ENCODE measurements at regions of chr1 and their contacts with region 1.

Region 1: GRCh38 chr1:55215256-55216021 is at the start of gene USP24:
- DNase-seq: peak; percentile 82
- H3K4me3 Mint-ChIP-seq: peak within 1 kb of the TSS; percentile 93
- H3K27ac Mint-ChIP-seq: peak within 1 kb of the TSS; percentile 96
- H3K4me1 Mint-ChIP-seq: peaks cover 61% of the 10 kb centered on the region
- H3K27me3 Mint-ChIP-seq: peaks cover 3% of the 10 kb centered on the region
- total RNA-seq, gene USP24: 53.6 and 58.6 TPM in 2 replicates

Region 2: DNA sequence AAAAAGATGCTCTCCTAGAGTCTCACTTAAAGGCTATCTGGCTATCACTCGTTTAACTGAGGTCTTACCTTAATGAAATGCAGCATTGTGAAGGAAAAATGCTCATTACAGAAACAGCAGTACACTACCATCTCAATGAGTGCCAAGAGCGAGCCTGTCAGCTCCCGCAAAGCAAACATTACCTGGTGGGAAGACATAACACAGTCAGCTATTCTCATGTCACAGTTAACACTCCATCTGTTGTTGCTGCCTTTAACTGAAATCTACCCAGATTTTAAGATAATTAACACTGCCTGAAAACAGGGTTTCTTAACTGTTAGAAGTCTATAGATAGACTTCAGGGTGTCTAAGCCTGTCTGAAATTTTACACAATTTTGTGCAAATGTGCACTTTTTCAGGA is 137.0 kb before region 1 on chr1:
- intact Hi-C with region 1: loop called (anchors 5 kb)
- DNase-seq: no peak
- H3K4me3 Mint-ChIP-seq: no peak overlapping the region
- H3K27ac Mint-ChIP-seq: no peak overlapping the region
- H3K4me1 Mint-ChIP-seq: peaks cover 4% of the 10 kb centered on the region
- H3K27me3 Mint-ChIP-seq: no peaks in the 10 kb centered on the region

Region 3: DNA sequence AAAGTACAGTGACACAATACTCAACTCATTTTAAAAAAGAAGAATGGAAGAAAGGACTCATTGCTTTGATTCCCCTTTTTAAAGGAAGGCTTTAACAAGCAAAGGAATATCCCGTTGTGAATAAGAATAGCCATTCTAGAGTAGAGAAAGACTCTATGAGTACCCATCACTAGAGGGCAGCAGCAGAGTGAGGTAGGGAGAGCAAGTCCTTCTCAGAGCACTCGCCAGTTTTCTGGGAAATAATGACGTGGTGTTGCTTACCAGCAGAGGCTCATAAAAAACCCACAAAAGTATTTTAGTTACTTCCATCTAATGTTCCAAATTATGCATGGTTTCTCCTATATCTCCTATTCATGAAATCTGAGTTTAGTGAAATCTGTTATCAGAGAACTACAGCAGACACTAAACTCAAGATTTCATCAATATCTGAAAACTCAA is 74.9 kb before region 1 on chr1:
- intact Hi-C with region 1: loop called (anchors 1 kb)
- DNase-seq: peak; percentile 66
- H3K4me3 Mint-ChIP-seq: no peak overlapping the region
- H3K27ac Mint-ChIP-seq: peak overlapping the region; percentile 51
- H3K4me1 Mint-ChIP-seq: peaks cover 23% of the 10 kb centered on the region
- H3K27me3 Mint-ChIP-seq: no peaks in the 10 kb centered on the region

Region 4: GRCh38 chr1:55188909-55189308 is 26.5 kb before region 1 on chr1:
- intact Hi-C with region 1: loop called (anchors 2 kb)
- DNase-seq: no peak
- H3K4me3 Mint-ChIP-seq: no peak overlapping the region
- H3K27ac Mint-ChIP-seq: peak overlapping the region; percentile 60
- H3K4me1 Mint-ChIP-seq: peaks cover 24% of the 10 kb centered on the region
- H3K27me3 Mint-ChIP-seq: no peaks in the 10 kb centered on the region

Region 5: GRCh38 chr1:55204997-55205396 is 10.4 kb before region 1 on chr1:
- intact Hi-C with region 1: loop called (anchors 1 kb)
- DNase-seq: no peak
- H3K4me3 Mint-ChIP-seq: peak overlapping the region; percentile 16
- H3K27ac Mint-ChIP-seq: peak overlapping the region; percentile 62
- H3K4me1 Mint-ChIP-seq: peaks cover 60% of the 10 kb centered on the region
- H3K27me3 Mint-ChIP-seq: no peaks in the 10 kb centered on the region

Region 6: DNA sequence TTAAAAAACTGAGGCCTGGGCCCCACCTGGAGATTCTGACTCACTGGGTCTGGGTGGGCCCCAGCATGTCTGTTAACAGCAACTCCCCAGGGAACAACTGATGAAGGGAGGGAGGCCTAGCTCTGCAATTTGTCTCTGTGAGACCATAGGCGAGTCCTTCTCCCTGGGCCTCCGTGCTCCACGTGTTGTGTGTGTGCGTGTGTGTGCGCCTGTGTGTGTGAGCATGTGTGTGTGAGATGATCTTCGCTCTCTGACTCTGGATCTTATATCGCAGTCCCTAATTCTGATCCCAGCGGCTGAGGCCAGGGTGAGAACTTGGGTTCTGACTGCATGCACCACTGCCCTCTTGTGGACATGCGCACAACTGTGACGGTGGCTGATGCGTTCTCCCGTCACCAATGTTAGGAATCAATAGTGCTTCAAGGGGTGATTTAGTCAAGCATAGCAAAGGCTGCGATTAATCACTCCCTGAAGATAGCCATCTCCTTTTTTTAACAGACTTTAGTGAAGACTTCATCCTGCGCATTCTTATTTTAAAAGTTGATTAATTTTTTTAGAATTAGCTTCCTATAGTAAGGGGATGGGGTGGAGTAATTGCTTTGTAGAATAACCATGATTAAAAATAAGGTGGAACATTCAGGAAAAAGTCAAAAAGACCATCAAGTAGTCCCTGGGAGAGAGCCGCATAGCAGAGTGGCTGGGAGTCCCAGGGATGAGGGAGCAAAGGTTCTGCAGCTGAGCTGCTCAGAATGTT is 62.1 kb after region 1 on chr1:
- intact Hi-C with region 1: loop called (anchors 1 kb)
- DNase-seq: peak; percentile 66
- H3K4me3 Mint-ChIP-seq: no peak overlapping the region
- H3K27ac Mint-ChIP-seq: peak overlapping the region; percentile 32
- H3K4me1 Mint-ChIP-seq: peaks cover 26% of the 10 kb centered on the region
- H3K27me3 Mint-ChIP-seq: peaks cover 10% of the 10 kb centered on the region

Region 7: GRCh38 chr1:55836086-55836485 is 620.6 kb after region 1 on chr1:
- intact Hi-C with region 1: no loop called
- DNase-seq: no peak
- H3K4me3 Mint-ChIP-seq: no peak overlapping the region
- H3K27ac Mint-ChIP-seq: no peak overlapping the region
- H3K4me1 Mint-ChIP-seq: no peaks in the 10 kb centered on the region
- H3K27me3 Mint-ChIP-seq: no peaks in the 10 kb centered on the region

Measured in activated T-helper 1 cell treated with anti-CD3 and anti-CD28 coated beads, Interleukin-12 subunit alpha, Interleukin-12 subunit beta, Interleukin-2, Interleukin-4 antibody, amounts not matched to agents 30 ng/mL and 10 ng/mL and 1 ng/mL, durations not matched to agents 14 hours and 24 hours and 36 hours (primary cell).